BJ (cell line): ENCODE measurements at regions of chr22 and their contacts with region 1.

Region 1: DNA sequence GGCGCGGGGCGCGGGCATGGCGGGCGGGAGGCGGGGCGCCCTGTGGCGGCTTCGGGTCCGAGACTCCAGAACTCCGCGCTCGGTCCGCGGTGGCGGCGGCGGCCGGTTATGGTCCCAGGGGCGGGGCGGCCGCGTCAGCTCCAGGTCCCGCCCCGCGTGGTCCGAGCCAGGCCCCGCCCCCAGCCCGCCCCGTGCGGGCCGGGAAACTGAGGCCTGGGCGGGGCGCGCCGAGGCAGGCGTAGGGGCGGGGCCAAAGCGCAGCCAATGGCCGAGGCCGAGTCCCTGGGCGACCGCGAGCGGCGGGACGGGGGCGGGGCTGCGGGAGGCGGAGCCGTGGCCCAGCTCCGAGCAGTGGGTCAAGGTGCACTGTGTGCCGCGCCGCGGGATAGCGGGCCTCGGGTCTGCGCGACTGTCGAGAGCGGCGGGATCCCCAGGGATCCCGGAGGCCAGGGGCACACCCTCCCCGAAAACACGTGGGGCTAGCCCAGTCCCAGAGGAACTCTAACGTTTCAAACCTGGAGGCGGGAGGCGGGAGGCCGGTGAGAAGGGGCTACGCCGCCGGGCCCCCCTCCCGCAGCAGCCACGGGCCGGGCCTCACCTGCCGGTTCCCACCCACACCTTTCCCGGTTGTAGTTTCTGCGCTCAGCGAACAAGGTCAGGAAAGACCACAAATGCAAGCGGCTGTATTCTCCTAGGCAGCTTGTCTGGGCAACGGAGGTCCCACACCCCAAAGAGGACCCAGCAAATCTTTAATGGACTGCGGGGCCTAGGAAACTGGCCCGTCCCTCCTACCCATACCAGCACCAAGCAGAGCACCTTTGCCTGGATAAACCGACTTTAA is at the start of gene SLC25A1:
- DNase-seq: no peak
- H3K4me3 ChIP-seq: peak within 1 kb of the TSS; percentile 80
- H3K27me3 ChIP-seq: no peaks in the 10 kb centered on the region
- CTCF ChIP-seq: no peak
- polyA plus RNA-seq, gene SLC25A1: 19.6 and 36.9 TPM in 2 replicates

Region 2: DNA sequence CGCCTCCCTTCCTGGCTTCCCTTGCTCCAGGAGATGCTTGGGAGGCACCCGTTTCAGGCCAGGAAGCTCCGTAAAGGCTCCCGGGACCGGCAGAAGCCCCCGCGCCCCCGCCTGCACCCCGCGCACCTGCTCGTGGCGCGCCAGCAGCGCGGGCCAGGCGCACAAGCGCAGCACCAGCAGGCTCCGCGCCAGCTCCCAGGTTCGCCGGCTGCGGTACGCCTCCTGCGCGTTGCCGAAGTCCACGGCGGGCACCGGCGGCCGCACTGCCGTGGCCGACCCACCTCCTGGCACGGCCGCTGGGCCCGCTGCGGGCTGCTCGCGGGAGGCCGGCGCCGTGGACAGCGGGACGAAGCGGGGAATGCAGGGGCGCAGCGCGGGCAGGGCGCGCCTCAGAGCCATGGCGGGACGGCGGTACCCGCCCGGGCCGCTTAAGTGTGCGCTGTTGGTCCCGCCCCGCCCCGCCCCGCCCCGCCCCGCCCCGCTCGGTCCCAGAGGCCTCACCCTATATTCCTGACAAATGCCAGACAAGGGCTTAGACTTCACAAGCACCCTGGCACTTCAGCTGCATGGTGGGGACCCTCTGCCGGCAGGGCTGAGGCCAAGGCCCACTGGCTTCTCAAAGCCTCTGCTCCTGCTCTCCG is 242.9 kb before region 1 on chr22 and contains the start of gene PRODH:
- CTCF ChIA-PET with region 1: no interaction called
- POLR2A ChIA-PET with region 1: interaction called, 12 read pairs
- DNase-seq: no peak
- H3K4me3 ChIP-seq: no peak within 1 kb of the TSS
- H3K27me3 ChIP-seq: no peaks in the 10 kb centered on the region
- CTCF ChIP-seq: no peak
- polyA plus RNA-seq, gene PRODH: not detected in 2 replicates

Region 3: GRCh38 chr22:19143967-19144400 is 34.9 kb before region 1 on chr22:
- CTCF ChIA-PET with region 1: interaction called, 13 read pairs
- POLR2A ChIA-PET with region 1: interaction called, 3 read pairs
- DNase-seq: no peak
- H3K4me3 ChIP-seq: peak overlapping the region; percentile 78
- H3K27me3 ChIP-seq: peaks cover 22% of the 10 kb centered on the region
- CTCF ChIP-seq: no peak

Region 4: DNA sequence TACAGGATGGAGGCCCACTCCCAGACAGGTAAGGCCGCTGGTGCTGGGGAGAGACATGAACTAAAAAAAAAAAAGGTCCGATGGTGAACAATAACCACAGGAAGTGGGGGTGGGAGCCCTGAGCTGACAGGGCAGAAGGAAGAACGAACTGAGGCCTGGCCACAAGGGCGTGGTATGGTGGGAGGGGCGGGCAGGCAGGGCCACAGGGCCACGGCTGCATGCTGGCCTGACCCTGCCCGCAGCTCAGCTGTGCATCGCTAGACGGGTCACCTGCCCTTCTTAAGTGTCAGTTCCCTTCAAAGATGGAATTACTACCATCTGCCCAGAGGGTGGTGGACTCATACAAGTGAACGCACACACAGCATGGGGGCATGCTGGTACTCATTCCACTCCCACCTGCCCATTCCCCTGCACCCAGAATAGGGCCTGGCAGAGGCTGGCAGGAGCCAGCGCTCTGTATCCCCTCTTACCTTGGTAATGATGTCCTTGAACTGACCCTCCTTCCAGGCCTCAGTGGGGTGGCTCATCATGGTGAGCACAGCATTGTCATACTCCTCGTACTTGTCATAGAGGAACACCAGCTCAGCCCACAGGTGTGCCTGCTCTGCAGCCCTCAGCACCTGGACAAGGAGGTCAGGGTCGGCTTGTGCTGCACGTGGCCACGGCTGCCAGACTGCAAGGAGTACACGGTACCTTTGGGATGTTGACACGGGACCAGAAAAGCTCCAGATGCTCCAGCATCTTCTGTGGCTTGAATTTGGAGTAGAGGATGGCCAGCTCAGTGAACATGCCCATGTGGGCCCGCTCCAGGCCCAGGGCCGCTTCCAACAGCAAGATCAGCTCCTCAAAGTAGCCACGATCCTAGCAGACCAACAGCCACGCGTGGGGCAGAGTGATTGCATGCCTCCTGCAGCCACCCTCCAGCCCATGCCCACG is 17.2 kb after region 1 on chr22:
- CTCF ChIA-PET with region 1: interaction called, 12 read pairs
- POLR2A ChIA-PET with region 1: no interaction called
- DNase-seq: no peak
- H3K4me3 ChIP-seq: no peak overlapping the region
- H3K27me3 ChIP-seq: no peaks in the 10 kb centered on the region
- CTCF ChIP-seq: no peak